Activated T-helper 1 cell treated with anti-CD3 and anti-CD28 coated beads, Interleukin-12 subunit alpha, Interleukin-12 subunit beta, Interleukin-2, Interleukin-4 antibody, amounts not matched to agents 30 ng/mL and 10 ng/mL and 1 ng/mL, durations not matched to agents 14 hours and 24 hours and 36 hours (primary cell): ENCODE measurements at regions of chr19 and their contacts with region 1.

Region 1: GRCh38 chr19:10403137-10404021 is at the start of gene CDC37:
- DNase-seq: peak; percentile 98
- H3K4me3 Mint-ChIP-seq: peak within 1 kb of the TSS; percentile 94
- H3K27ac Mint-ChIP-seq: peak within 1 kb of the TSS; percentile 96
- H3K4me1 Mint-ChIP-seq: peaks cover 51% of the 10 kb centered on the region
- H3K27me3 Mint-ChIP-seq: no peaks in the 10 kb centered on the region
- total RNA-seq, gene CDC37: 320 and 326 TPM in 2 replicates

Region 2: DNA sequence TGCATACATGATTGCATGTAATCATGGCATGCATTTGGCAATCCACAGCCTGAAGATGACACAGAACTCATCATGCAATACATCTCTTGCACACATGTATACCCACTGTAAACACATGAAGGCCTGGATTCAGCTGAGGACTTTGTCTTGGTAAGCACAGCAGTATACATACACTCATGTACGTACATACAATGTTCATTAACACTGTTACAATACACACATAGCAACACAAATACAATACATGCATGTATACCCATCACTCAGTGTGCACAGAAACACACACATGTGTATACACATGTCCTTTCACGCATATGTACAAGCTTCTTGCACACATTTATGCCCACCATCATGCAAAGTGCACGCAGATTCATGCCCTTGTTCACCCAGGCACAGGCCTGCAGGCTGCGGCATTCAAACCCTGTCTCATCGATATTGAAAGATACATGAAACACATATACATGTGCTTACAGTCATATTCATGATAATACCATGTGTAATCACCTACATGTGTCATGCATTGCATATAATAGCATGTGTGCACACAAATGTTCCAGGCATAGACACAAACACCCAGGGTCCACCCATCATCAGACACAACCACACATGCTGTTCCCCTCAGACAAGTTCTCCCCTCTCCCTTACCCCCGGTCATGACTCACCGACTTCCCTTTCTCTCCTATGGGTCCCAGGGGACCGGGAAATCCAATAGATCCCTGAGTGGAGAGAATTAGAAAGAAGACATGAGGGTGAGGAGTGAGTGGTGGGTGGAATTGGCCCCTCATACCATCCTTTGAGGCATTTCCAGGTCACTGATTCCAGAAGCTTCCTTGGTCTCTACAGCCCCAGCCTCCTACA is 421.7 kb before region 1 on chr19:
- intact Hi-C with region 1: no loop called
- DNase-seq: no peak
- H3K4me3 Mint-ChIP-seq: no peak overlapping the region
- H3K27ac Mint-ChIP-seq: no peak overlapping the region
- H3K4me1 Mint-ChIP-seq: no peaks in the 10 kb centered on the region
- H3K27me3 Mint-ChIP-seq: peaks cover 11% of the 10 kb centered on the region

Region 3: DNA sequence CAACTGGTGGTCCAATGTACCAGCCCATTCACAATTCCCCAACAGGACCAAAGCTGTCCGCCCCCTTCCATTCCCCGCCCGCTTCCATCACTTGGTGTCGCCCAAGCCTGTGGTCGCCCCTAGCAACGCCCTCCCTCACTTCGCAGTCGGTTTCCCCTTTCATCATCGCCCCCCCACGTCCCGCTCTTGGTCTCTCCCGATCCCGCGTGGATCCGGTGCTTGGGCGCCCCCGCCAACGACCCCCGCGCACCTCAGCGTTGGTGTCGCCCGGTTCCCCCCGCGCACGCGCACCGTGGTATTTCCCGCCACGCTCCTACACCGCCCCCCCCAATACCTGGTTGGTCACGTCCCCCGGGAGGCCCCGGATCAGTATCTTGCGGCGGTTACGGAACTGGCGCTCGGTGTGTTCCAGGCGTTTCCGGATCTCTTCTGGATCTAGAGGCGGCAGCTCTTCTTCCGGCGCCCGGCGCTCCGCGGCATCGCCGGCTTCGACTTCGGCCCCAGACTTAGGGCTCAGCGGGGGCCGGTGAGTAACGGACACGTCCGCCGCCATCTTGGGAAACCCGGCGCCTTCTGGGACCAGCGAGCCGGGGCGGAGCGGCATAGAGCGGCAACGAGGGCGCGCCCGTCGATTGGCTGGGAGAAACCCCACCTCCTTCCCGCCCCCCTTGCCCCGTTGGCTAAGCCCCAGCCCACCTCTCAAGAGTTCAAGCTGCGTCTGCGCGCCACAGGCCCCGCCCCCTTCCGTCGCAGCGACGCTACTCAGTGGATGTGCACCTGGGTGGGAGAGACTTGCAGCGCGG is 70.2 kb before region 1 on chr19 and contains the start of gene RAVER1:
- intact Hi-C with region 1: loop called (anchors 1 kb)
- DNase-seq: peak; percentile 95
- H3K4me3 Mint-ChIP-seq: peak within 1 kb of the TSS; percentile 90
- H3K27ac Mint-ChIP-seq: peak within 1 kb of the TSS; percentile 95
- H3K4me1 Mint-ChIP-seq: peaks cover 11% of the 10 kb centered on the region
- H3K27me3 Mint-ChIP-seq: no peaks in the 10 kb centered on the region
- total RNA-seq, gene RAVER1: 92.5 and 92.8 TPM in 2 replicates

Region 4: DNA sequence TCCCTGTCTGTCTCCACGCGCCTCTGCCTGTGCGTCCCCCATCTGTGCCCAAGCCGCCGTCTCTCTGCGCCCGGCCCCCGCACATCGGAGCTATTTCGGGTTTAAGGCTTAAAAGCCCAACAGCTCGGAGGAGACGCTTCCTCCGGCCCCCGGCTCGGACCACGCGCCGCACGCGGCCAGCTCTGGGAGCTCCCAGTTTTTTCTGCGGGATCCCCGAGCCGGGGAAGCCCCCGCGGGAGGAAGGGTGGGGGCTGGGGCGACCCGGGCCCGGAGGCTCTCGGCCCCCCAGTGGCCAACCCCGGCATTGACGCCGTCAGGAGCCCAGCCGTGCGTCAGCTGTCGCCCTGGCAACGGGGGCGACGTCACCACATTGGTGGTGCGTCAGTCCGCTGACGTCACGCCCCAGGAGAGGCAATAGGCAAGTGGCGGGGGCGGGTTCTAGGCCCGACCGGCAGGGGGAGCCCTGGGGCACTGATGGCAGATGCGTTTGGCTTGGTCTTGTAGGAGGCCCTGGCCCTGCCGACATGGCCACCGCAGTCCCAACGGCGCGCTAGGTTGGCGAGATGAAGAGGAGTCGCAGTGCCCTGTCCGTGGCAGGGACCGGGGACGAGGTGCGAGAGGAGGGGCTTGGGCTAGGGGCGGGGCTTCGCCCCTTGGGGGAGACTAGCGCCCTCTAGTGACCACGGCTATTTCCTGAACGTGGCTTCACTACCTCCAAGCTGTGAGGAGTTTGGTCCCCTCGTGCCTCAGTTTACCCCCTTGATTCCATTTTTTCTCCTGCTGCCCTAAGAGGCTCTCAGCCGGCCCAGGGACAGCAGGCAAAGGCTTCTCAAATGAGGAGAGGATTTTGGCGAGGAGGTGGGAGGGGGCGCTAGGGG is 13.2 kb after region 1 on chr19:
- intact Hi-C with region 1: loop called (anchors 1 kb)
- DNase-seq: peak; percentile 94
- H3K4me3 Mint-ChIP-seq: peak overlapping the region; percentile 81
- H3K27ac Mint-ChIP-seq: peak overlapping the region; percentile 94
- H3K4me1 Mint-ChIP-seq: peaks cover 51% of the 10 kb centered on the region
- H3K27me3 Mint-ChIP-seq: peaks cover 4% of the 10 kb centered on the region

Region 5: GRCh38 chr19:10431943-10432735 is 28.8 kb after region 1 on chr19:
- intact Hi-C with region 1: loop called (anchors 1 kb)
- DNase-seq: no peak
- H3K4me3 Mint-ChIP-seq: peak overlapping the region; percentile 82
- H3K27ac Mint-ChIP-seq: peak overlapping the region; percentile 91
- H3K4me1 Mint-ChIP-seq: peaks cover 66% of the 10 kb centered on the region
- H3K27me3 Mint-ChIP-seq: peaks cover 20% of the 10 kb centered on the region

Region 6: DNA sequence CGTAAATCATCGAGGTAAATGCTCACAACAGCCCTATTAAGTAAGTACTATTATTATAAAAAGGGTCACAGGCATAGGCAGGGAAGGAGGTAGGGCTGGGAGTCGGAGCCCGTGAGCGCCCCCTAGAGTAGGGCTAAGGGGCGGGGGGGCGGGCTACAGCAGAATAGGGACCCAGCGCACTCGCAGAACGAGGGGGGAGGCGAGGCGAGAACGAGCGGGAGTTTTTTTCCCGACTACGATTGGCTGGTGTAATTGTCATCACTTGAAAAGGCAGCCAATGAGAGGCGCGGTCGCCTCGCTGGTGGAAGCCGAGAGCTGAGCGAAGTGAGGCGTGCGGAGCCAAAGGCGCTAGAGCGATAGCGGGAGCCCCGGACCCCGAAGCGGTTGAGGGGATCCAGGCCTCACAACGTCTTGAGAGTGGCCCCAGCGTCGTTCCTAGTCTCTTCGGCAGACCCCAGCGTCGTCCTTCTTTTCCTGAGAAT is 75.6 kb after region 1 on chr19:
- intact Hi-C with region 1: loop called (anchors 1 kb)
- DNase-seq: peak; percentile 86
- H3K4me3 Mint-ChIP-seq: peak overlapping the region; percentile 68
- H3K27ac Mint-ChIP-seq: peak overlapping the region; percentile 76
- H3K4me1 Mint-ChIP-seq: peaks cover 16% of the 10 kb centered on the region
- H3K27me3 Mint-ChIP-seq: no peaks in the 10 kb centered on the region

Region 7: DNA sequence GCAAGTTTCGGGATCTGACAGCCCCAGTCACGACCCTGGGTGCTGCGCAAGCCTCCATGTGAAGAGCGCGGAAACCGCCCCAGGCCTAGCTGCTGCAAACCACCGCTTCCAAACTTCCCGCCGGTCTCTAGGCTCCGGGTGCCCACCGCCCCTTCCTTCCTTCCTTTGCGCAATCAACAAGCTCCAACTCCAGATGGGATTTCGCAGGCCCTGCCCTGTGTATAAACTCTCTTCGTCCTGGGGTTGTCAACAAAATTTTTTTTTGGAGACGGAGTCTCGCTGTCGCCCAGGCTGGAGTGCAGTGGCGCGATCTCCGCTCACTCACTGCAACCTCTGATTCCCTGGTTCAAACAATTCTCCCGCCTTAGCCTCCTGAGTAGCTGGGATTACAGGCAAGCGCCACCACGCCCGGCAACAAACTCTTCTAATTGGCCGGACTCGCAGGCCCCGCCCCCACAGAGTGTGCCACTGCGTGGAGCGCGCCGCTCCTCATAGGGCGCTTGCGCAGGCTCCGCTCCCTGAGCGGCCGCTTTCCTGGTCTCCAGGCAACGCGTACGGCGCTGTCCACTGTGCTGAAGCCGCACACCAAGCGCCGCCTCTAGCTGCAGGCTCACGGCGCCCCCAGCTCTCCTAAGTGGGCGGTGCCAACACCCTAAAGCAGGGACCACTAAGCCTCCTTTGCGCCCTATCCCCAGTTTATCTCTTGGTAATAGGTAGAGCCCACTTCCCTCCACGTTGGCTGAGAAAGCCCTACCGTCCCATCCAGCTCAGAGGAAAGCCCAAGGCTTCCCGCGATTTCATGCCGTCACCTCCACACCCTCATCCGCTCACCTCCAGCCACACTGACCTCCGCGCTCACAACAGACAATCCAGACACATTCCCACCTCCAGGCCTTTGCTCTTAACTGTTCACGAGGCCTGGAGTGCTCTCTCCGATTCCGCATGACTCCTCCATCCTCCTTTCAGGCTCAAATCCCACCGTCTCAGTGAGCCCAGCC is 292.3 kb after region 1 on chr19:
- intact Hi-C with region 1: loop called (anchors 5 kb)
- DNase-seq: peak; percentile 91
- H3K4me3 Mint-ChIP-seq: peak overlapping the region; percentile 55
- H3K27ac Mint-ChIP-seq: no peak overlapping the region
- H3K4me1 Mint-ChIP-seq: peaks cover 26% of the 10 kb centered on the region
- H3K27me3 Mint-ChIP-seq: peaks cover 6% of the 10 kb centered on the region